Posterior cingulate gyrus (tissue), 11 donors: ENCODE measurements at regions of chrX and their contacts with region 1.

Region 1: GRCh38 chrX:150365051-150365989 is 2.2 kb downstream of the MAMLD1 start:
- DNase-seq: peak; percentile 73 to 97 (median 78)

Region 2: GRCh38 chrX:149962859-149963757 is 402.2 kb before region 1 on chrX:
- intact Hi-C with region 1: loop called (anchors 5 kb)
- DNase-seq: peak in 9 of 10 donors; percentile 20 to 94 (median 48)

Region 3: GRCh38 chrX:150291014-150291413 is 74.3 kb before region 1 on chrX:
- intact Hi-C with region 1: loop called (anchors 2 kb)
- DNase-seq: peak; percentile 51 to 97 (median 80)

Region 4: DNA sequence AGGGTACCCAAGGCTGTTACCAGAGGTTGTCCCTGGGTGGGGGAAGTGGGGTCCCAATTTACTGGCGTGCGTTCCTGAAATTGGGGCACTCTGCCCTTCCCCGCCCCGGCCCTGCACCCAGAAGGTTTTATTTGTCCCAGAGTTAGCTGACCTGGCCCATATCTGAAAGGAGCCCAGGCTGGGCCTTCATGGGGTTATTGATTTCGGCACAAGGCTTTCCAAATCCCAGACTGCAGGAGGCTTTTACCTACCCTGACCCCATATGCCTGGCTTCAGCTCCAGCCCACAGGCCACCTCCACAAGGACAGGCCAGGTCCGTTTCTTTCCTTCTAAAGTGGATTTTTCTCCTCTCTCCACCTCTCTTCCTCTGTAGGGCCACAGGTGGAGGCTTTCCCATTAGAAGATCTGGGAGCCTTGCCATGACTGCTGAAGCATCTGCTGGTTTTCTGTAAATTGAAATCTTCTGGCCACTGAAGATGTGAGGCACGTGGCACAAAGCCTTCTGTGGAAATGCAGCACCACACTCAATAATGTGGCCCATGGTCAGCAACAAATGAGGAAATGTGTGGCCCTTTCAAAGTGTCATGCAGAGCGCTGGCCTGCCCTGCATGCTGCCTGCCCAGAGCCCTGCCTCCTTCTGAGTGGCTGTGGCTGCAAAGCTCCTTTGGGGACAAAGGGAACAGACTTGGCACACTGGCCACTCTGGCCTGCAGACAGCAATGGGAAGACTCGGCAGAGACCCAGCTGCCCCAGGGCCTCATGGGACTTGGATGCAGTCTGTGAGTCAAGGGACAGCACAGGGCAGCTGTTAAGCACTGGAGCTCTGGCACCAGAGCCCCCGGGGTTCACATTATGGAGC is 160.0 kb after region 1 on chrX:
- intact Hi-C with region 1: no loop called
- DNase-seq: peak; percentile 67 to 96 (median 77)

Region 5: GRCh38 chrX:150568320-150569154 is 203.2 kb after region 1 on chrX and contains the start of gene MTM1:
- intact Hi-C with region 1: loop called (anchors 10 kb)
- DNase-seq: peak; percentile 86 to 99 (median 90)

Region 6: GRCh38 chrX:150715184-150715583 is 349.9 kb after region 1 on chrX:
- intact Hi-C with region 1: loop called (anchors 10 kb)
- DNase-seq: no peak

Region 7: DNA sequence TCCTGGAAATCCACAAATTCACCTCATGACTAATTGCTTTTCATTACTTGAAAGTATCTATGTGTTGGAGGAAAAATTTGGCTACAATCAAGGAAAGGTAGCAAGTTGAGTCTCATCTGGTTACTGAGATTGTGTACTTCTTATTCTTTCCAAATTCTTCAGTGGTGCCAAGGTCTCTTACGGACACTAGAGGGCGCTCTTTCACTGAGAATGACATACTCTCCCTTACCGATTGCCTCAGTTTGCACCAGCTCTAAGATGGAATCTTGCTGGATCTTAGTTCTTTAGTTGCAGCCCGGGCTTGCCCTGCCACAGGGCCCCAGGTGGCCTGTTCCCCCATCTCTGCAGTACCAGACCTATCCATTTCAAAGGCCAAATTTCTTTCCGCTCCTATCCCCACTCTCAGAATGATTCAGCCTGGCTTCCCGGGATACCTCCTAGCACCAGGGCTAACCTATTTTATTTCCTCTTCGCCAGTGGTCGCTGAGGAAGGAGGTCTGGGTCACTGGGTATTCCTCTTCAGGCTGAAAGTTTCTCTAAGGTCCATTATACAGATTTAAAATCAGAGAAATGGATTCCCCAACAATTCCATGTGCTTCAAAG is 786.4 kb after region 1 on chrX:
- intact Hi-C with region 1: no loop called
- DNase-seq: peak in 4 of 10 donors; percentile 15 to 74 (median 31)

Region 8: DNA sequence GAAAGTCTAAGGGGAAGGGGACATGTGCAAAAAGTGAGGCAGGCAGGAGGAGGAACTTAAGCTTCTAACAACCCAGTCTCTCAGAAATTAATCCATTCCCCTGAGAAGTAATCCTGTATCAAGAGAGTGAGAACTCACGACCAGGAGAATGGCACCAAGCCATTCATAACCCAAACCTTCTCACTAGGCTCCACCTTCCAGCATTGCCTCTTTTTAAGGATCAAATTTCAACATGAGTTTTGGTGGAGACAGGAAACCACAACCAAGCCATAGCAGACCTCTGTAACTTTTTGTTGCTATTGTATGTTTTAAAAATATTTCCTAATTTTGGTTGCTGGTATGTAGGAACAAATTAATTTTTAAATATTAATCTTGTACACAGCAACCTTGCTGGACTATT is 1231.0 kb after region 1 on chrX:
- intact Hi-C with region 1: no loop called
- DNase-seq: no peak